WTC11 (cell line): ENCODE measurements at regions of chr19 and their contacts with region 1.

Region 1: DNA sequence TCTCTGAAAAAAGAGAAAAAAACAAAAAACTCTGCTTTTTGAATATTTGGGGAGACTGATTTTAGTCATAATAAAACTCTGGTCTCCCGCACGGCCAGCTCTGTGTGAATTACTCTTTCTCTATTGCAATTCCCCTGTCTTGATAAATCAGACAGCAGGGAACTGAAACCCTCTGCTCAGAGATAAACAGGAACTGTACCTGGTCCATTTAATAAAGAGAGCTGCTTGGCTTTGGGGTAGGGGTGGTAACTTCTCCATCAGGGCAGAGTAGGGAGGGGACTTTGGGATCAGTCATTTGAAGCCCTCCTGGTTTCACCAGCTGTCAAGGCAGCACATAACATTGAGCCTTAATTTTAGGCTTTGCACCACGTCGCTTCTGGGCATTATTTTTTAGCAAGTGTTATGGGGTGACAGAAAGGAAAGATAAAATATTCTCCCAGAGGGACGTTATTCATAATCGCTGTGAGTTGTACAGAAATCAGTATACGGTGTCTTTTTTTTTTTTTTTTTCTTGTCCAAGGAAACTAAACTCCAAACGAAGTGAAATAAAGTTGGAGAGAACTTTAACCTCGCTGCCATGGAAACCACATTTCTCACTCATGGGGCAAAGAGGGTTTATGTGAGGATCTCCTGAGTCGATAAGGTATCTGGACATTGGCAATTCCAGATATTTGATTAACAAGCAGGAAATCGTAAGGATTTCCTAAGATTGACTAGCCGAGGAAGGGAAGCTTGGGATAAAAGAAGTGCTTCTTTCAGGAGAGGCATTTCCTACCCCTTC is 99.0 kb upstream of the MRI1 start:
- DNase-seq: no peak
- ATAC-seq: no peak
- H3K4me3 Mint-ChIP-seq: no peak overlapping the region
- H3K27ac Mint-ChIP-seq: no peak overlapping the region
- H3K4me1 Mint-ChIP-seq: no peaks in the 10 kb centered on the region
- H3K27me3 Mint-ChIP-seq: no peaks in the 10 kb centered on the region
- CTCF ChIP-seq: no peak

Region 2: GRCh38 chr19:13610039-13610691 is 55.1 kb before region 1 on chr19:
- CTCF ChIA-PET with region 1: no interaction called
- POLR2A ChIA-PET with region 1: interaction called, 10 read pairs
- DNase-seq: peak; percentile 40
- ATAC-seq: peak; percentile 39
- H3K4me3 Mint-ChIP-seq: no peak overlapping the region
- H3K27ac Mint-ChIP-seq: 0 out of 2 replicates have a peak overlapping the region, but pooled peaks have one; percentile 53
- H3K4me1 Mint-ChIP-seq: peaks cover 12% of the 10 kb centered on the region
- H3K27me3 Mint-ChIP-seq: no peaks in the 10 kb centered on the region
- CTCF ChIP-seq: no peak

Region 3: DNA sequence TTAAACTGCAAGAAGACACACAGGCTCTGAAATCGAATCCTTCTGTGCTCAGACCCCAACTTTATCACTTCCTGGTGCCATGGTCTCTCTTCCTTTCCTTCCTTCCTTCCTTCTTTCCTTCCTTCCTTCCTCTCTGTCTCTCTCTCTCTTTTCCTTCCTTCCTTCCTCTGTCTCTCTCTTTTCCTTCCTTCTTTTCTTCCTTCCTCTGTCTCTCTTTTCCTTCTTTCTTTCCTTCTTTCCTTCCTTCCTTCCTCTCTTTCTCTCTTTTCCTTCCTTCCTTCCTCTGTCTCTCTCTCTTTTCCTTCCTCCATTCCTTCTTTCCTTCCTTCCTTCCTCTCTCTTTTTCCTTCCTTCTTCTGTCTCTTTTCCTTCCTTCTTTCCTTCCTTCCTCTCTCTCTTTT is 31.8 kb before region 1 on chr19:
- CTCF ChIA-PET with region 1: no interaction called
- POLR2A ChIA-PET with region 1: interaction called, 13 read pairs
- DNase-seq: no peak
- ATAC-seq: no peak
- H3K4me3 Mint-ChIP-seq: no peak overlapping the region
- H3K27ac Mint-ChIP-seq: no peak overlapping the region
- H3K4me1 Mint-ChIP-seq: peaks cover 15% of the 10 kb centered on the region
- H3K27me3 Mint-ChIP-seq: no peaks in the 10 kb centered on the region; the same call in none of the 2 replicates
- CTCF ChIP-seq: no peak